PC-3 (cell line): ENCODE measurements at regions of chr14 and their contacts with region 1.

Region 1: DNA sequence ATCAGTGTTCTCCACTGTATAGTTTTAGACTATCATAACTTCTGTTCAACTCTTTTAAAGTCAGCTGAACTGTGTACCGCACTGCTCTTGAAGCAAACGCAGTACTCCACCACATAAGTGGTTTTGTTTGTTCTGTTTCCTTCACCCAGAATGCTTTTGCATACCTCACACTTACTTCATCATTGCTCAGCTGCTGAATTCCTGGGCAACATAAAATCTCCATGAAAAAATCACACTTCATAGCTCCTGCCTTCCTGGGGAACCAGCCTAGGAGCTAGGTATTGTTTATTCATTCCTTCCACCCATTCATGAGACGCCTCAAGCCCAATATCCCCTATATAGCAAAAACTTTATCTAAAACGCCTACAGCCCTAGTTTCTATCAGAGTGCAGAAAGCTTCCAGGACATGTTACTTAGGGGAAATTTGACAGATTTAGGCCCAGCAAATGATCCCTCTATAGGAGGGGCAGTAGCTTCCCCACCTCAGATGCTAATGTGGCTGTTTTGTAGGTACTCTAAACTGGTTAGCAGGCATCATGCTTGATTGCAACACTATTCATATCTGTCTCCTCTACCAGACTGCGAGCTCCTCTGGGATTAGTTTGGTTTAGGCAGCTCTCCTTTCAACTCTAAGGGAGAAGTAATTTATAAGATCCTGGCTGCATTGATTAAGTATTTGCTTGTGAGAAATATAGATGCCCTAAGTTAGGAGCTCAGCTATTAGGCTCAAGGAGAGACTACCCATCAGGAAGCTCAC is 44.5 kb downstream of the LRRC9 start:
- DNase-seq: peak; percentile 70
- ATAC-seq: peak; percentile 66
- H3K4me3 ChIP-seq: no peak overlapping the region
- H3K27ac ChIP-seq: no peak overlapping the region
- H3K4me1 ChIP-seq: peaks cover 18% of the 10 kb centered on the region
- H3K27me3 ChIP-seq: peaks cover 23% of the 10 kb centered on the region
- CTCF ChIP-seq: no peak

Region 2: GRCh38 chr14:60008042-60008441 is 43.6 kb after region 1 on chr14:
- CTCF ChIA-PET with region 1: interaction called, 3 read pairs
- POLR2A ChIA-PET with region 1: interaction called, 3 read pairs
- intact Hi-C with region 1: loop called (anchors 1 kb)
- DNase-seq: peak; percentile 80
- ATAC-seq: peak; percentile 74
- H3K4me3 ChIP-seq: no peak overlapping the region
- H3K27ac ChIP-seq: no peak overlapping the region
- H3K4me1 ChIP-seq: peaks cover 19% of the 10 kb centered on the region
- H3K27me3 ChIP-seq: no peaks in the 10 kb centered on the region
- CTCF ChIP-seq: no peak

Region 3: GRCh38 chr14:60091550-60092530 is 127.4 kb after region 1 on chr14 and contains the start of gene PCNX4:
- CTCF ChIA-PET with region 1: interaction called, 3 read pairs
- POLR2A ChIA-PET with region 1: interaction called, 3 read pairs
- intact Hi-C with region 1: loop called (anchors 1 kb)
- DNase-seq: peak; percentile 100
- ATAC-seq: peak; percentile 93
- H3K4me3 ChIP-seq: peak within 1 kb of the TSS; percentile 76
- H3K27ac ChIP-seq: peak within 1 kb of the TSS; percentile 85
- H3K4me1 ChIP-seq: peaks cover 42% of the 10 kb centered on the region
- H3K27me3 ChIP-seq: no peaks in the 10 kb centered on the region
- CTCF ChIP-seq: no peak
- total RNA-seq, gene PCNX4: 117 and 151 TPM in 2 replicates